ENCODE measurements at regions of chr3 and their contacts with region 1.

Region 1: GRCh38 chr3:87082796-87083440 is 92.0 kb upstream of the VGLL3 start:
- DNase-seq: peak; percentile 75
- ATAC-seq: peak; percentile 98
- H3K4me3 ChIP-seq: no peak overlapping the region
- H3K27ac ChIP-seq: no peak overlapping the region
- H3K4me1 ChIP-seq: no peaks in the 10 kb centered on the region
- H3K27me3 ChIP-seq: no peaks in the 10 kb centered on the region
- CTCF ChIP-seq: peak; percentile 86
- POLR2A ChIP-seq: no peak
- RAD21 ChIP-seq: peak; percentile 89

Region 2: GRCh38 chr3:86087160-86087871 is 995.6 kb before region 1 on chr3:
- CTCF ChIA-PET with region 1: no interaction called
- POLR2A ChIA-PET with region 1: no interaction called
- dilution Hi-C with region 1: no loop called
- in situ Hi-C with region 1: no loop called
- intact Hi-C with region 1: no loop called
- DNase-seq: no peak
- ATAC-seq: no peak
- H3K4me3 ChIP-seq: no peak overlapping the region
- H3K27ac ChIP-seq: no peak overlapping the region
- H3K4me1 ChIP-seq: no peaks in the 10 kb centered on the region
- H3K27me3 ChIP-seq: no peaks in the 10 kb centered on the region
- CTCF ChIP-seq: no peak
- POLR2A ChIP-seq: no peak
- RAD21 ChIP-seq: no peak

Region 3: GRCh38 chr3:86684486-86684885 is 398.4 kb before region 1 on chr3:
- CTCF ChIA-PET with region 1: no interaction called
- POLR2A ChIA-PET with region 1: no interaction called
- dilution Hi-C with region 1: no loop called
- in situ Hi-C with region 1: no loop called
- intact Hi-C with region 1: no loop called
- DNase-seq: no peak
- ATAC-seq: no peak
- H3K4me3 ChIP-seq: no peak overlapping the region
- H3K27ac ChIP-seq: no peak overlapping the region
- H3K4me1 ChIP-seq: no peaks in the 10 kb centered on the region
- H3K27me3 ChIP-seq: no peaks in the 10 kb centered on the region
- CTCF ChIP-seq: no peak
- POLR2A ChIP-seq: no peak
- RAD21 ChIP-seq: no peak

Region 4: GRCh38 chr3:86744051-86744450 is 338.9 kb before region 1 on chr3:
- CTCF ChIA-PET with region 1: no interaction called
- POLR2A ChIA-PET with region 1: no interaction called
- dilution Hi-C with region 1: no loop called
- in situ Hi-C with region 1: no loop called
- intact Hi-C with region 1: no loop called
- DNase-seq: no peak
- ATAC-seq: no peak
- H3K4me3 ChIP-seq: no peak overlapping the region
- H3K27ac ChIP-seq: no peak overlapping the region
- H3K4me1 ChIP-seq: no peaks in the 10 kb centered on the region
- H3K27me3 ChIP-seq: no peaks in the 10 kb centered on the region
- CTCF ChIP-seq: no peak
- POLR2A ChIP-seq: no peak
- RAD21 ChIP-seq: no peak

Region 5: GRCh38 chr3:86774082-86774691 is 308.7 kb before region 1 on chr3:
- CTCF ChIA-PET with region 1: interaction called, 8 read pairs
- POLR2A ChIA-PET with region 1: no interaction called
- dilution Hi-C with region 1: no loop called
- in situ Hi-C with region 1: no loop called
- intact Hi-C with region 1: loop called (anchors 1 kb)
- DNase-seq: peak; percentile 58
- ATAC-seq: peak; percentile 75
- H3K4me3 ChIP-seq: no peak overlapping the region
- H3K27ac ChIP-seq: no peak overlapping the region
- H3K4me1 ChIP-seq: no peaks in the 10 kb centered on the region
- H3K27me3 ChIP-seq: no peaks in the 10 kb centered on the region; the same call in 1 of the 2 replicates
- CTCF ChIP-seq: peak; percentile 65
- POLR2A ChIP-seq: no peak
- RAD21 ChIP-seq: peak; percentile 72

Region 6: GRCh38 chr3:86867982-86868381 is 214.9 kb before region 1 on chr3:
- CTCF ChIA-PET with region 1: no interaction called
- POLR2A ChIA-PET with region 1: no interaction called
- dilution Hi-C with region 1: no loop called
- in situ Hi-C with region 1: no loop called
- intact Hi-C with region 1: loop called (anchors 10 kb)
- DNase-seq: peak; percentile 77
- ATAC-seq: peak; percentile 61
- H3K4me3 ChIP-seq: no peak overlapping the region
- H3K27ac ChIP-seq: no peak overlapping the region
- H3K4me1 ChIP-seq: no peaks in the 10 kb centered on the region
- H3K27me3 ChIP-seq: no peaks in the 10 kb centered on the region
- CTCF ChIP-seq: no peak
- POLR2A ChIP-seq: no peak
- RAD21 ChIP-seq: no peak

Region 7: DNA sequence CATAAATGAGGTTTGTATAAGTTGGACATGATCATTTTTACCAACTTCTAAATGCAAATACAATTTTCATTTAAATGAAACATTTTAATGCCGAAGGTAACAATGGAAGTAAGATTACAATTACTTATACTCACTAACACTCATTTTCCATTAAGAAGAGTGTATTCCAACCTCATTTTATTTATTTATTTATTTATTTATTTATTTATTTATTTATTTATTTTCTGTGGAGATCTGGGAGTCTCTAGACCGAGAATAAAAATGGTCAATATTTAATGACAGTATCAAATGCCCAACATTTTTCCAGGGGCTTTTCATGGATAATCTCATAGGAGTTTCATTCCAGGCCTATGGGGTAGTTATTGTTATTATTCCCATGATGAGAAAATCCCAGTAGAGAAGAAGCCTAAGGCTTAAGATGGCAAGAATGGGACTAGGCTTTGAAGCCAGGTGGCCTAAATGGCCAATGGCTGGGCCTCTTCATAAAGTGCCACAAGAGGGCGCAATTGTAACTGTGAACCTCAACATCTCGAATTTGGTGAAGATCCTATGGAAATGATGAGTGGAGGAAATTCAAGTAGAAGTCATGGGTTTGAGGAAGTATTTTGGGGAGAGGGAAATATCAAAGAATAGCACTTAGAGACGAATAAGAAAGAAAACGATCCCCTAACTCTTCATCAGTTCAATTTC is 113.3 kb before region 1 on chr3:
- CTCF ChIA-PET with region 1: interaction called, 5 read pairs
- POLR2A ChIA-PET with region 1: no interaction called
- dilution Hi-C with region 1: no loop called
- in situ Hi-C with region 1: no loop called
- intact Hi-C with region 1: loop called (anchors 2 kb)
- DNase-seq: peak; percentile 61
- ATAC-seq: peak; percentile 19; the same call in 1 of the 2 replicates
- H3K4me3 ChIP-seq: no peak overlapping the region
- H3K27ac ChIP-seq: no peak overlapping the region
- H3K4me1 ChIP-seq: peaks cover 5% of the 10 kb centered on the region; the same call in 1 of the 2 replicates
- H3K27me3 ChIP-seq: no peaks in the 10 kb centered on the region
- CTCF ChIP-seq: peak; percentile 63
- POLR2A ChIP-seq: no peak
- RAD21 ChIP-seq: peak; percentile 66

Region 8: GRCh38 chr3:87006844-87007439 is 76.0 kb before region 1 on chr3:
- CTCF ChIA-PET with region 1: no interaction called
- POLR2A ChIA-PET with region 1: no interaction called
- dilution Hi-C with region 1: no loop called
- in situ Hi-C with region 1: no loop called
- intact Hi-C with region 1: loop called (anchors 5 kb)
- DNase-seq: peak; percentile 50
- ATAC-seq: peak; percentile 65
- H3K4me3 ChIP-seq: no peak overlapping the region
- H3K27ac ChIP-seq: no peak overlapping the region
- H3K4me1 ChIP-seq: no peaks in the 10 kb centered on the region
- H3K27me3 ChIP-seq: no peaks in the 10 kb centered on the region
- CTCF ChIP-seq: peak; percentile 52
- POLR2A ChIP-seq: no peak
- RAD21 ChIP-seq: peak; percentile 45